ENCODE measurements at regions of chr18 and their contacts with region 1.

Region 1: GRCh38 chr18:63603772-63604171 is 16.6 kb downstream of the SERPINB13 start:
- DNase-seq: peak; percentile 55
- H3K4me3 Mint-ChIP-seq: no peak overlapping the region
- H3K27ac Mint-ChIP-seq: peak overlapping the region; percentile 6
- H3K4me1 Mint-ChIP-seq: peaks cover 18% of the 10 kb centered on the region
- H3K27me3 Mint-ChIP-seq: no peaks in the 10 kb centered on the region
- CTCF ChIP-seq: no peak

Region 2: GRCh38 chr18:63588890-63589289 is 14.9 kb before region 1 on chr18:
- CTCF ChIA-PET with region 1: interaction called, 8 read pairs
- POLR2A ChIA-PET with region 1: interaction called, 45 read pairs
- intact Hi-C with region 1: no loop called
- DNase-seq: peak; percentile 50
- H3K4me3 Mint-ChIP-seq: no peak overlapping the region
- H3K27ac Mint-ChIP-seq: no peak overlapping the region
- H3K4me1 Mint-ChIP-seq: peaks cover 52% of the 10 kb centered on the region
- H3K27me3 Mint-ChIP-seq: no peaks in the 10 kb centered on the region
- CTCF ChIP-seq: no peak